ENCODE measurements at regions of chr22 and their contacts with region 1.

Region 1: DNA sequence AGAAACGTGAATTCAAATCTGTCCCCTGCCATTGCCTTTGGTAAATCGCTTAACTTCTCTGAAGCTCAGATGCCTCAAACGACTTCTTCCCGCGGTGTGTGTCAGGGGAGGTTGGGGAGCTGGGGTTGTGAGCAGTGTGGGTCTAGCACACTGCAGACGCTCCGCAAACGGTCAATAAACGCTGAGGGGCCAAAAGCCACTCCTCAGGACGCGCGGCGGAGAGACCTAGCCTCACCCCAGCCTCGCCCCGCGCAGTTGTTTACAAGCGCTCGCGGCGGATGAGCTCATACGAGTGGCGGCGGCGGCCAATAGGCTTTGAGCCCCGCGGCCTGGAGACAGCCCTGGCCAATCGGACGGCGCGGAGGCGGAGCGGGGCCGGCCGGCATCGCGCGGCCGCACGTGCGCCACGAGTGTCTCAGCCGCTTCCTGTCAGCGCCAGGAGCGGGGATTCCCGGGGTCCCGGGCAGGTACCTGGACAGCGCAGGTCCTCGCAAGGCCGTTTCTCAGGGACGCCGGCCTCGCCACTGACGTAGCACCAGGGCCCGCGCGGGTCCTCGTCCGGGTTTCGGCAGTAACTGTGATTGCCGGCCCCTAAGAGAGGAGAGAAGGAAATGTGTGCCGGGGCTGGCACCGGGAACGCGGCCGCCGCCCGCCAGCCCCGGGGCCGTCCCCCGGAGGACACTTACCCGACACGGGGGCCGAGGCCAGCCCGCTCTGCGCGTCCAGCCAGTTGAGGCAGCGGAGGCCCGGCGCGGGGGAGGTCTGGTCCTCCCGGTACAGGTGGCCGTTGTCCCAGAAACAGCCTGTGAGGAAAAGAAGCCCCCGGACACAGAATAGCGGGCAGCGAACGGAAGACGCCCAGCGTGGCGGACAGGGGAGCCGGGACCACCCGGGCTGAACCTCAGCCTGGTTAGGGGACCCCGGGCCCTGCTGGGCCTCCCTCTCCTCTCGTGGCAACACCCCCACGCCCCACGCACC is 1.5 kb downstream of the PIK3IP1 start:
- DNase-seq: peak; percentile 96 to 97 (median 96)
- H3K4me3 ChIP-seq: peak overlapping the region; percentile 89 to 99
- H3K4me3 Mint-ChIP-seq: peak overlapping the region; percentile 95 to 100 (median 98)
- H3K27ac ChIP-seq: peak overlapping the region; percentile 100
- H3K27ac Mint-ChIP-seq: peak overlapping the region; percentile 99 to 100 (median 100)
- H3K4me1 ChIP-seq: peaks cover 72% of the 10 kb centered on the region
- H3K4me1 Mint-ChIP-seq: peaks cover 41 to 83% (median 60%) of the 10 kb centered on the region in 4 donors
- H3K27me3 ChIP-seq: no peaks in the 10 kb centered on the region
- H3K27me3 Mint-ChIP-seq: no peaks in the 10 kb centered on the region

Region 2: DNA sequence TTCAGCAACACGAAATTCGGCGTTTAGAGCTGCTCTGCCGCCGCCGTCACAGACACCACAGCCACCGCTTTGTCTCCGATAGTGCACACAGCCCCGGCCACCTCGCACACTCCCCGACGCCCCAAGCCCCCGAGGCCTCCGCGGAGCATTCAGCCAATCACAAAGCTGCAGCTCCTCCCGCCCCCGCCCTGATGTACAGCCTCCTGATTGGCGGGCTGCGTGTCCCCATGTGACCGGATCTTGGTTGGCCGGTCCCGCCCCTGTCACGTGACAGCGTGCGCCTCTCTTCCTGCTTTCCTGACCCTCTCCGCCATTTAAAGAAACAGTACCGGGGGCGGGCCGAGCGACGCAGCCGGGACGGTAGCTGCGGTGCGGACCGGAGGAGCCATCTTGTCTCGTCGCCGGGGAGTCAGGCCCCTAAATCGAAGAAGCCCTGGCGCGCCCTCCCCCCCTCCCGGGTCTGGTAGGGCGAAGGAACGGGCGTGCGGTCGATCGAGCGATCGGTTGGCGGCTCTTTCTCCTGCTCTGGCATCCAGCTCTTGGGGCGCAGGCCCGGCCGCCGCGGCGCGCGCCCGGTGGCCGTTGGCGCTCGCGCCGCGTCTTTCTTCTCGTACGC is 321.8 kb before region 1 on chr22 and contains the start of gene TUG1:
- CTCF ChIA-PET with region 1: no interaction called
- POLR2A ChIA-PET with region 1: interaction called, 65 read pairs
- intact Hi-C with region 1: no loop called
- DNase-seq: peak; percentile 97 to 99 (median 98)
- H3K4me3 ChIP-seq: peak within 1 kb of the TSS; percentile 68 to 80
- H3K4me3 Mint-ChIP-seq: peak within 1 kb of the TSS; percentile 89 to 96 (median 94)
- H3K27ac ChIP-seq: peak within 1 kb of the TSS; percentile 90
- H3K27ac Mint-ChIP-seq: peak within 1 kb of the TSS; percentile 94 to 98 (median 97)
- H3K4me1 ChIP-seq: peaks cover 39% of the 10 kb centered on the region
- H3K4me1 Mint-ChIP-seq: peaks cover 30 to 69% (median 52%) of the 10 kb centered on the region in 4 donors
- H3K27me3 ChIP-seq: no peaks in the 10 kb centered on the region
- H3K27me3 Mint-ChIP-seq: no peaks in the 10 kb centered on the region
- total RNA-seq, gene TUG1: 129 to 132 TPM

Region 3: DNA sequence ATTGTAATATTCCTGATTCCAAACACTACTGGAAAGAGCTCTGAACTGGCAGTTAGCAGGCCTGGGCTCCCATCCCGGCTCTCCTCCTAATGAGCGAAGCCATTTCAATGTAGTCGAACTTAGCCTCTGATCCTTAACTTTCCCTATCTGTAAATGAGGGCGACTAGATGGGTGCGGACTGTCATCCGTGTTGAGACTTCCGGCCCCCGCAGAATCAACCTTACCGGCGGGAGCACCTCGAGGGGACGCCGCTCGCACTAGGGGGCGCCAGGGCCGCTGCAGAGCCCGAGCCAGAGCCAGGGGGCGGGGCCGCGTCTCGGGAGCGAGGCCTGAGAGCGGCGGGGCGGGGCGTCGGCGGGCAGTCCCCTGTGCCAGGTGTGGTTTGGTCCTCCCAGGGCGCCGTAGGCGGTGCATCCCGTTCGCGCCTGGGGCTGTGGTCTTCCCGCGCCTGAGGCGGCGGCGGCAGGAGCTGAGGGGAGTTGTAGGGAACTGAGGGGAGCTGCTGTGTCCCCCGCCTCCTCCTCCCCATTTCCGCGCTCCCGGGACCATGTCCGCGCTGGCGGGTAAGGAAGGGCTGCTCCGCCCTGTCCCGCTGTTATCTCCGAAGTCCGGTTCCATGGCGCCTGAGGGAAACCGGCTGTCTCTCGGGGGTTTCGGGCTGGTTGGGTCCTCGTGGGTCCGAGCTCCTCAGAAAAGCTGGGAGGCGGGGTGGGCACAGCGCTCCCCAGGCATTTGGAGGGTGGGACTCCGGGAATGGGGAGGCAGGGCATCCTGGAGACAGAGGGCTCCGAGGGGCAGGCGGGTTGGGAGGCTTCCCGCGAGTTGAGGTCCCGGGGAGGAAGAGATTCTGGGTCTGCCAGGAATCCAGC is 78.7 kb before region 1 on chr22 and contains the start of gene LIMK2:
- CTCF ChIA-PET with region 1: interaction called, 48 read pairs
- POLR2A ChIA-PET with region 1: interaction called, 138 read pairs
- intact Hi-C with region 1: loop called (anchors 1 kb)
- DNase-seq: peak; percentile 93 to 94 (median 94)
- H3K4me3 ChIP-seq: peak within 1 kb of the TSS; percentile 74 to 92
- H3K4me3 Mint-ChIP-seq: peak within 1 kb of the TSS; percentile 89 to 98 (median 90)
- H3K27ac ChIP-seq: peak within 1 kb of the TSS; percentile 81
- H3K27ac Mint-ChIP-seq: peak within 1 kb of the TSS; percentile 76 to 97 (median 94)
- H3K4me1 ChIP-seq: peaks cover 61% of the 10 kb centered on the region
- H3K4me1 Mint-ChIP-seq: peaks cover 43 to 68% (median 50%) of the 10 kb centered on the region in 4 donors
- H3K27me3 ChIP-seq: no peaks in the 10 kb centered on the region
- H3K27me3 Mint-ChIP-seq: no peaks in the 10 kb centered on the region
- total RNA-seq, gene LIMK2: 32.2 to 33.2 TPM

Region 4: DNA sequence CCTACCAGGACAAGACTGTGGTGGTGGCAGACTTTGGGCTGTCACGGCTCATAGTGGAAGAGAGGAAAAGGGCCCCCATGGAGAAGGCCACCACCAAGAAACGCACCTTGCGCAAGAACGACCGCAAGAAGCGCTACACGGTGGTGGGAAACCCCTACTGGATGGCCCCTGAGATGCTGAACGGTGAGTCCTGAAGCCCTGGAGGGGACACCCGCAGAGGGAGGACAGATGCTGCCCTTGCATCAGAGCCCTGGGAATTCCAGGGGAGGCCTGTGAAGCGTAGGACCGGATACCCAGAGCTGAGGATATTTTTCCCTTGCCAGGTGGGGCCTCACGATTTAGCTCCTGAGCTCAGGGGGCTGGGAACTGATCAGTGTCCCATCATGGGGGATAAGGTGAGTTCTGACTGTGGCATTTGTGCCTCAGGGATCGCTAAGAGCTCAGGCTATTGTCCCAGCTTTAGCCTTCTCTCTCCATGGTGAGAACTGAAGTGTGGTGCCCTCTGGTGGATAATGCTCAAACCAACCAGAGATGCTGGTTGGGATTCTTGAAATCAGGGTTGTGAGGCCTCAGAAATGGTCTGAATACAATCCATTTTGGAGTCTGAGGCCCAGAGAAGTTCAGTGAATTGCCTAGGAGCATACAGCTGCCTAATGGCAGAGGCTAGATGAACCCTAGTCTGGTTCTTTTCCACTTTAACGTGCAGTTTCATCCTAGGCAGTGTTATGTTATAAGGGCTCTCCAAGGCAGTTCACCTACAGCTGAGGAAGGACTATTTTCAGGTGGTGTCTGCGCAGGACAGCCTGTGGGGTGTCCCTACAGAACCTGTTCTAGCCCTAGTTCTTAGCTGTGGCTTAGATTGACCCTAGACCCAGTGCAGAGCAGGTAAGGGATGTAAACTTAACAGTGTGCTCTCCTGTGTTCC is 18.0 kb before region 1 on chr22:
- CTCF ChIA-PET with region 1: interaction called, 140 read pairs
- POLR2A ChIA-PET with region 1: interaction called, 1,203 read pairs
- intact Hi-C with region 1: no loop called
- DNase-seq: peak in 3 of 5 donors; percentile 44 to 56 (median 51)
- H3K4me3 ChIP-seq: no peak overlapping the region
- H3K4me3 Mint-ChIP-seq: peak overlapping the region in 1 of 8 donors; percentile 2
- H3K27ac ChIP-seq: no peak overlapping the region
- H3K27ac Mint-ChIP-seq: peak overlapping the region; percentile 61 to 84 (median 73)
- H3K4me1 ChIP-seq: peaks cover 52% of the 10 kb centered on the region
- H3K4me1 Mint-ChIP-seq: peaks cover 30 to 77% (median 51%) of the 10 kb centered on the region in 4 donors
- H3K27me3 ChIP-seq: no peaks in the 10 kb centered on the region
- H3K27me3 Mint-ChIP-seq: no peaks in the 10 kb centered on the region

Region 5: GRCh38 chr22:31321421-31321820 is 30.6 kb after region 1 on chr22:
- CTCF ChIA-PET with region 1: interaction called, 3 read pairs
- POLR2A ChIA-PET with region 1: interaction called, 306 read pairs
- intact Hi-C with region 1: no loop called
- DNase-seq: no peak
- H3K4me3 ChIP-seq: no peak overlapping the region
- H3K4me3 Mint-ChIP-seq: no peak overlapping the region
- H3K27ac ChIP-seq: no peak overlapping the region
- H3K27ac Mint-ChIP-seq: peak overlapping the region in 2 of 7 donors; percentile 0 to 1
- H3K4me1 ChIP-seq: no peaks in the 10 kb centered on the region
- H3K4me1 Mint-ChIP-seq: peaks cover 0 to 9% (median 7%) of the 10 kb centered on the region in 4 donors
- H3K27me3 ChIP-seq: no peaks in the 10 kb centered on the region
- H3K27me3 Mint-ChIP-seq: no peaks in the 10 kb centered on the region

Region 6: GRCh38 chr22:31496007-31496734 is 205.4 kb after region 1 on chr22 and contains the start of gene SFI1:
- CTCF ChIA-PET with region 1: no interaction called
- POLR2A ChIA-PET with region 1: interaction called, 6 read pairs
- intact Hi-C with region 1: loop called (anchors 5 kb)
- DNase-seq: peak; percentile 96 to 97 (median 96)
- H3K4me3 ChIP-seq: peak within 1 kb of the TSS; percentile 93 to 96
- H3K4me3 Mint-ChIP-seq: peak within 1 kb of the TSS; percentile 87 to 98 (median 91)
- H3K27ac ChIP-seq: peak within 1 kb of the TSS; percentile 89
- H3K27ac Mint-ChIP-seq: peak within 1 kb of the TSS; percentile 94 to 98 (median 97)
- H3K4me1 ChIP-seq: peaks cover 60% of the 10 kb centered on the region
- H3K4me1 Mint-ChIP-seq: peaks cover 23 to 63% (median 32%) of the 10 kb centered on the region in 4 donors
- H3K27me3 ChIP-seq: no peaks in the 10 kb centered on the region
- H3K27me3 Mint-ChIP-seq: no peaks in the 10 kb centered on the region
- total RNA-seq, gene SFI1: 323 to 333 TPM